ENCODE measurements at regions of chr11 and their contacts with region 1.

Region 1: GRCh38 chr11:2196970-2197770 is 25.6 kb upstream of the TH start:
- DNase-seq: peak; percentile 51 to 87 (median 73)
- ATAC-seq: peak; percentile 93
- H3K4me3 ChIP-seq: no peak overlapping the region
- H3K4me3 Mint-ChIP-seq: no peak overlapping the region
- H3K27ac ChIP-seq: no peak overlapping the region
- H3K27ac Mint-ChIP-seq: no peak overlapping the region
- H3K4me1 ChIP-seq: peaks cover 14% of the 10 kb centered on the region
- H3K4me1 Mint-ChIP-seq: peaks cover 12% of the 10 kb centered on the region
- H3K27me3 ChIP-seq: peaks cover 0 to 3% of the 10 kb centered on the region in 2 experiments
- H3K27me3 Mint-ChIP-seq: peaks cover 6% of the 10 kb centered on the region
- CTCF ChIP-seq: peak; percentile 57

Region 2: GRCh38 chr11:2186669-2187279 is 10.4 kb before region 1 on chr11:
- CTCF ChIA-PET with region 1: interaction called, 12 read pairs
- POLR2A ChIA-PET with region 1: no interaction called
- intact Hi-C with region 1: no loop called
- DNase-seq: peak; percentile 32 to 78 (median 52)
- ATAC-seq: peak; percentile 97
- H3K4me3 ChIP-seq: no peak overlapping the region
- H3K4me3 Mint-ChIP-seq: no peak overlapping the region
- H3K27ac ChIP-seq: no peak overlapping the region
- H3K27ac Mint-ChIP-seq: no peak overlapping the region
- H3K4me1 ChIP-seq: peaks cover 5% of the 10 kb centered on the region
- H3K4me1 Mint-ChIP-seq: peaks cover 5% of the 10 kb centered on the region
- H3K27me3 ChIP-seq: peaks cover 0 to 10% of the 10 kb centered on the region in 2 experiments
- H3K27me3 Mint-ChIP-seq: peaks cover 14% of the 10 kb centered on the region
- CTCF ChIP-seq: peak; percentile 67

Region 3: GRCh38 chr11:2269601-2270321 is 72.6 kb after region 1 on chr11:
- CTCF ChIA-PET with region 1: interaction called, 3 read pairs
- POLR2A ChIA-PET with region 1: no interaction called
- intact Hi-C with region 1: loop called in 1 of 2 experiments (anchors 2 kb)
- DNase-seq: peak in 7 of 9 experiments; percentile 34 to 85 (median 56)
- ATAC-seq: peak; percentile 54
- H3K4me3 ChIP-seq: peak overlapping the region; percentile 43 to 51
- H3K4me3 Mint-ChIP-seq: peak overlapping the region; percentile 60
- H3K27ac ChIP-seq: no peak overlapping the region
- H3K27ac Mint-ChIP-seq: no peak overlapping the region
- H3K4me1 ChIP-seq: peaks cover 34% of the 10 kb centered on the region
- H3K4me1 Mint-ChIP-seq: peaks cover 29% of the 10 kb centered on the region
- H3K27me3 ChIP-seq: peaks cover 0 to 9% of the 10 kb centered on the region in 2 experiments
- H3K27me3 Mint-ChIP-seq: peaks cover 15% of the 10 kb centered on the region
- CTCF ChIP-seq: no peak

Region 4: GRCh38 chr11:2298795-2299761 is 101.9 kb after region 1 on chr11:
- CTCF ChIA-PET with region 1: interaction called, 65 read pairs
- POLR2A ChIA-PET with region 1: interaction called, 6 read pairs
- intact Hi-C with region 1: loop called in 1 of 2 experiments (anchors 1 kb)
- DNase-seq: peak in 6 of 9 experiments; percentile 45 to 75 (median 66)
- ATAC-seq: peak; percentile 51
- H3K4me3 ChIP-seq: peak overlapping the region; percentile 43 to 85
- H3K4me3 Mint-ChIP-seq: peak overlapping the region; percentile 90
- H3K27ac ChIP-seq: peak overlapping the region; percentile 80 to 81
- H3K27ac Mint-ChIP-seq: peak overlapping the region; percentile 92
- H3K4me1 ChIP-seq: peaks cover 47% of the 10 kb centered on the region
- H3K4me1 Mint-ChIP-seq: peaks cover 64% of the 10 kb centered on the region
- H3K27me3 ChIP-seq: no peaks in the 10 kb centered on the region
- H3K27me3 Mint-ChIP-seq: no peaks in the 10 kb centered on the region
- CTCF ChIP-seq: no peak

Region 5: DNA sequence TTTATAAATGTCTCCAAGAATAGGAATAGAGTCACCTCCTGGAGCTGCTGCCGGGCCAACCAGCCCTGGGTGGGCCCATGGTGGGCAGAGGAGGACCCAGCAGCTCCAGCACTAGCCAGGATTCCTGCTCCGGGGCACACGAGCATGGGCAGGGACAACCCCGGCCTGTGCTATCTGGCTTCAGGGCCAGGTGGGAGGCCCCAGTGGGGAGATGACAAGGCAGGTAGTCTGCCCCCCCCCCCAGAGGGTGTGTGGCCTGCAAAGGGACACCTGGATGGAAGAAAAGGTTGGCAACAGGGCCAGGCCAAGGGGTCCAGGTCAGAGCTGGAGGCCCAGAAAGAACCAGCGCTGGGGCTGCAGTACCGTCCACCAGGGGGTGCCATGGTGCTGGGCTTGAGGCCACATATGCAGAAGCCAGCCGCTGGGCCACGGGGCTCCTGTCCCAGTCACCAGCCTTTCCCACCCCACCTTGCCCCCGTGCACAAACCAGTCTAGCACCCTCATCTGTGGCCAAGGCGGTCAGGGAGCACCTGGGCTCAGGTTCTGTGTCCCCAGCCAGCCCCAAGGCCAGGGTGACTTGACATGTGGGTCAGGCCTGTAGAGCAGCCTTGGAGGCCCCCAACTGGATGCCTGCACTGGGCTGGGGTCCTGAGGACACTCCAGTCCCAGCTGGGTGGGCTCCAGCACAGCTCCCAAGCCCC is 108.1 kb after region 1 on chr11:
- CTCF ChIA-PET with region 1: interaction called, 65 read pairs
- POLR2A ChIA-PET with region 1: no interaction called
- intact Hi-C with region 1: no loop called
- DNase-seq: peak; percentile 67 to 93 (median 86)
- ATAC-seq: peak; percentile 52
- H3K4me3 ChIP-seq: peak overlapping the region; percentile 82 to 83
- H3K4me3 Mint-ChIP-seq: peak overlapping the region; percentile 91
- H3K27ac ChIP-seq: peak overlapping the region; percentile 48 to 61
- H3K27ac Mint-ChIP-seq: peak overlapping the region; percentile 86
- H3K4me1 ChIP-seq: peaks cover 56% of the 10 kb centered on the region
- H3K4me1 Mint-ChIP-seq: peaks cover 51% of the 10 kb centered on the region
- H3K27me3 ChIP-seq: no peaks in the 10 kb centered on the region
- H3K27me3 Mint-ChIP-seq: no peaks in the 10 kb centered on the region
- CTCF ChIP-seq: peak; percentile 78

Region 6: GRCh38 chr11:2428322-2428795 is 231.2 kb after region 1 on chr11:
- CTCF ChIA-PET with region 1: interaction called, 116 read pairs
- POLR2A ChIA-PET with region 1: no interaction called
- intact Hi-C with region 1: no loop called
- DNase-seq: peak; percentile 75 to 94 (median 87)
- ATAC-seq: peak; percentile 91
- H3K4me3 ChIP-seq: no peak overlapping the region
- H3K4me3 Mint-ChIP-seq: no peak overlapping the region
- H3K27ac ChIP-seq: no peak overlapping the region
- H3K27ac Mint-ChIP-seq: no peak overlapping the region
- H3K4me1 ChIP-seq: no peaks in the 10 kb centered on the region
- H3K4me1 Mint-ChIP-seq: no peaks in the 10 kb centered on the region
- H3K27me3 ChIP-seq: no peaks in the 10 kb centered on the region
- H3K27me3 Mint-ChIP-seq: no peaks in the 10 kb centered on the region
- CTCF ChIP-seq: peak; percentile 70